ENCODE measurements at regions of chr2 and their contacts with region 1.

Region 1: GRCh38 chr2:25878361-25879132 is at the start of gene ASXL2:
- DNase-seq: peak; percentile 97 to 98 (median 97)
- H3K4me3 ChIP-seq: peak within 1 kb of the TSS; percentile 81 to 98
- H3K4me3 Mint-ChIP-seq: peak within 1 kb of the TSS; percentile 94 to 99 (median 97)
- H3K27ac ChIP-seq: peak within 1 kb of the TSS; percentile 98
- H3K27ac Mint-ChIP-seq: peak within 1 kb of the TSS; percentile 94 to 99 (median 99)
- H3K4me1 ChIP-seq: peaks cover 39% of the 10 kb centered on the region
- H3K4me1 Mint-ChIP-seq: peaks cover 27 to 47% (median 35%) of the 10 kb centered on the region in 4 donors
- H3K27me3 ChIP-seq: no peaks in the 10 kb centered on the region
- H3K27me3 Mint-ChIP-seq: no peaks in the 10 kb centered on the region
- total RNA-seq, gene ASXL2: 56.0 to 63.6 TPM

Region 2: DNA sequence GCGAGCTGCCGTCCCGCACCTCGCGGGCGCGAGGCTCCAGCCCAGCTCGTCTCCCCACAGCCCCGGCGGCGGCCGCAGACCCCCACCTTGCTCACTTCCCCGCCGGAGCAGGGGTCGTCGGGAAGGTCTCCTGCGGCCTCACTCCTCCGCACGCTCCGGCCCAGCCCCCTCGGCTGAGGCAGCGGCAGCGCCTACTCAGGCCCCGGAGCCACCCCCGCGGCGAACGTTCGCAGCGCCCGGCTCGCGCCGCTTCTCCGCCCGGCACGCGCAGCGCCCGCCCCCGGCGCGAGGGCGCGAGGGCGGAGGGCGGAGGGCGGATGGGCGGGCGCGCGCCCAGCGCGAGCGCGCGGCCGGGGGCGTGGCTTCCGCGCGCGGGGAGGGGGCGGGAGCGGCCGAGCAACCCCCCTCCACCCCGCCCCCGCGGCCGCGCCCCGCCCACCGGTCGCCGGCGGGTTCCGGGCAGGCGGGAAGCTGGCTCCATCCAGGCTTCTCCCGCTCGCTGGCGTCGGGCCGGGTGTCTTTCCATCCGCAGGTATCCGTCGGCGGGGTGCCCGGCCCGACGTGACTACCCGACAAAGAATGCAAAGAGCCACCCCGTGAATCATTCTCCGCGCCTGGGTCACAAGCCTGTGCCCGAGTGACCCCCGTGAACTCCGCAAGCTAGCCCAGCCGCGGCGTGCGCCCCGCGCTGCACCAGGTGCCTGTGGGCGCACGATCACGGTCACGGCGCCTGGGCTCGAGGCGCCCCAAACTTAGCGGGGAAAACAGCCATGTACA is 205.1 kb before region 1 on chr2 and contains the start of gene DTNB:
- CTCF ChIA-PET with region 1: interaction called, 3 read pairs
- POLR2A ChIA-PET with region 1: interaction called, 22 read pairs
- intact Hi-C with region 1: loop called (anchors 1 kb)
- DNase-seq: peak; percentile 76 to 82 (median 79)
- H3K4me3 ChIP-seq: peak within 1 kb of the TSS; percentile 80 to 92
- H3K4me3 Mint-ChIP-seq: peak within 1 kb of the TSS; percentile 85 to 92 (median 88)
- H3K27ac ChIP-seq: peak within 1 kb of the TSS; percentile 69
- H3K27ac Mint-ChIP-seq: peak within 1 kb of the TSS; percentile 75 to 92 (median 86)
- H3K4me1 ChIP-seq: peaks cover 28% of the 10 kb centered on the region
- H3K4me1 Mint-ChIP-seq: peaks cover 20 to 36% (median 29%) of the 10 kb centered on the region in 4 donors
- H3K27me3 ChIP-seq: no peaks in the 10 kb centered on the region
- H3K27me3 Mint-ChIP-seq: no peaks in the 10 kb centered on the region
- total RNA-seq, gene DTNB: 42.1 to 45.3 TPM

Region 3: GRCh38 chr2:25794544-25795276 is 83.8 kb before region 1 on chr2:
- CTCF ChIA-PET with region 1: interaction called, 4 read pairs
- POLR2A ChIA-PET with region 1: interaction called, 8 read pairs
- intact Hi-C with region 1: loop called (anchors 2 kb)
- DNase-seq: peak; percentile 54 to 66 (median 55)
- H3K4me3 ChIP-seq: peak overlapping the region in 1 of 2 donors; percentile 48
- H3K4me3 Mint-ChIP-seq: peak overlapping the region; percentile 81 to 94 (median 90)
- H3K27ac ChIP-seq: peak overlapping the region; percentile 68
- H3K27ac Mint-ChIP-seq: peak overlapping the region; percentile 92 to 98 (median 94)
- H3K4me1 ChIP-seq: peaks cover 95% of the 10 kb centered on the region
- H3K4me1 Mint-ChIP-seq: peaks cover 63 to 91% (median 76%) of the 10 kb centered on the region in 4 donors
- H3K27me3 ChIP-seq: no peaks in the 10 kb centered on the region
- H3K27me3 Mint-ChIP-seq: no peaks in the 10 kb centered on the region

Region 4: DNA sequence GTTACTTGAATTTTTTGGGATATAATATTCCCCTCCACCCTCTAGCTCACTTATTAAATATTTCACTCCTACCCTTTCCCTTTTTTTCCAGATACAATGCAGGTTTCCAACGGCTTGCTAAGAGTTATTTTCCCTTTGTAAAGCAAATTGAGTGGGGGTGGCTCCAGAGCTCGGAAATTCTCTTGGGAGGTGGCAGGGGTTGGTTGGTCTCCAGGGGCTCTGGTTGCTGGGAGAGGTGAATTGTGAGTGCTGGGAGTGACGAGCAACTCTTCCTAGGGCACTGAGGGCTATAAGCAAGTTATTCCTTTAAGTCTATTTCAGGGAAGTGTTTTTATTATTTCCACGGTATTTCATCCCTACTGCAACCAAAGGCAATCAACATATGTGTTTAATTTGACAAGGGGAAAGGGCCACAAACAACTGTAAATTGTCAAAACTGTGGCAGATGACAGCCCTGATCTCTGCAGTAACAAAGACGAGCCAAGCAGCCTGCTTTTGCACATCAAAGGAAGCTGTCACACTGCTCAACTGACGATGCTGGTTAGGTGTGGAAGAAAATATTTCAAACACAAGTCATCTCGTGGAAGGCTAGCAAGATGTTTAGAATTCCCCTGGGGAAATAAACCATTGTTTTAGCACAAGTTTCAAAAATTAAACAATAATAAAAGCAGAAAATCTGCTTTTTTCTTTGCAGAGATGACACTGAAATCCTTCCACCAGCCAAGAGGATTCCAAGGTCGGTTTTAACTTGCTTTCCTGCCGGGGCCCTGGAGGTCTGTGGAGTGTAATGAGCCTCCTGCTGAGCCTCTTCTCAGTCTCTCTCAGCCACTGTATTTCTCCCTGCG is 34.5 kb after region 1 on chr2:
- CTCF ChIA-PET with region 1: interaction called, 10 read pairs
- POLR2A ChIA-PET with region 1: interaction called, 17 read pairs
- intact Hi-C with region 1: loop called (anchors 1 kb)
- DNase-seq: no peak
- H3K4me3 ChIP-seq: no peak overlapping the region
- H3K4me3 Mint-ChIP-seq: no peak overlapping the region
- H3K27ac ChIP-seq: no peak overlapping the region
- H3K27ac Mint-ChIP-seq: peak overlapping the region in 1 of 7 donors; percentile 48
- H3K4me1 ChIP-seq: no peaks in the 10 kb centered on the region
- H3K4me1 Mint-ChIP-seq: peaks cover 11 to 17% (median 12%) of the 10 kb centered on the region in 4 donors
- H3K27me3 ChIP-seq: no peaks in the 10 kb centered on the region
- H3K27me3 Mint-ChIP-seq: no peaks in the 10 kb centered on the region

Region 5: GRCh38 chr2:25982273-25982967 is 103.9 kb after region 1 on chr2 and contains the start of gene KIF3C:
- CTCF ChIA-PET with region 1: no interaction called
- POLR2A ChIA-PET with region 1: interaction called, 9 read pairs
- intact Hi-C with region 1: loop called (anchors 2 kb)
- DNase-seq: peak; percentile 71 to 81 (median 74)
- H3K4me3 ChIP-seq: peak within 1 kb of the TSS; percentile 36 to 66
- H3K4me3 Mint-ChIP-seq: peak within 1 kb of the TSS; percentile 83 to 92 (median 87)
- H3K27ac ChIP-seq: peak within 1 kb of the TSS; percentile 44
- H3K27ac Mint-ChIP-seq: peak within 1 kb of the TSS; percentile 36 to 89 (median 75)
- H3K4me1 ChIP-seq: peaks cover 11% of the 10 kb centered on the region
- H3K4me1 Mint-ChIP-seq: peaks cover 4 to 20% (median 9%) of the 10 kb centered on the region in 4 donors
- H3K27me3 ChIP-seq: no peaks in the 10 kb centered on the region
- H3K27me3 Mint-ChIP-seq: no peaks in the 10 kb centered on the region
- total RNA-seq, gene KIF3C: 4.1 to 5.1 TPM

Region 6: GRCh38 chr2:26033818-26034636 is 155.5 kb after region 1 on chr2 and contains the start of gene RAB10:
- CTCF ChIA-PET with region 1: no interaction called
- POLR2A ChIA-PET with region 1: interaction called, 34 read pairs
- intact Hi-C with region 1: loop called (anchors 1 kb)
- DNase-seq: peak; percentile 99
- H3K4me3 ChIP-seq: peak within 1 kb of the TSS; percentile 94 to 99
- H3K4me3 Mint-ChIP-seq: peak within 1 kb of the TSS; percentile 94 to 99 (median 97)
- H3K27ac ChIP-seq: peak within 1 kb of the TSS; percentile 86
- H3K27ac Mint-ChIP-seq: peak within 1 kb of the TSS; percentile 89 to 99 (median 97)
- H3K4me1 ChIP-seq: peaks cover 42% of the 10 kb centered on the region
- H3K4me1 Mint-ChIP-seq: peaks cover 16 to 46% (median 36%) of the 10 kb centered on the region in 4 donors
- H3K27me3 ChIP-seq: no peaks in the 10 kb centered on the region
- H3K27me3 Mint-ChIP-seq: no peaks in the 10 kb centered on the region
- total RNA-seq, gene RAB10: 67.8 to 77.2 TPM

Region 7: GRCh38 chr2:26345545-26346453 is 467.3 kb after region 1 on chr2 and contains the start of gene SELENOI:
- CTCF ChIA-PET with region 1: no interaction called
- POLR2A ChIA-PET with region 1: interaction called, 15 read pairs
- intact Hi-C with region 1: loop called (anchors 1 kb)
- DNase-seq: peak; percentile 99 to 100 (median 100)
- H3K4me3 ChIP-seq: peak within 1 kb of the TSS; percentile 87 to 98
- H3K4me3 Mint-ChIP-seq: peak within 1 kb of the TSS; percentile 97 to 100 (median 98)
- H3K27ac ChIP-seq: peak within 1 kb of the TSS; percentile 91
- H3K27ac Mint-ChIP-seq: peak within 1 kb of the TSS; percentile 91 to 100 (median 100)
- H3K4me1 ChIP-seq: peaks cover 42% of the 10 kb centered on the region
- H3K4me1 Mint-ChIP-seq: peaks cover 25 to 50% (median 33%) of the 10 kb centered on the region in 4 donors
- H3K27me3 ChIP-seq: no peaks in the 10 kb centered on the region
- H3K27me3 Mint-ChIP-seq: no peaks in the 10 kb centered on the region
- total RNA-seq, gene SELENOI: 19.6 to 20.0 TPM